Aorta (tissue), 5 donors: ENCODE measurements at regions of chr3 and their contacts with region 1.

Region 1: GRCh38 chr3:184017672-184018423 is at the start of gene ABCC5:
- DNase-seq: peak; percentile 95 to 96
- ATAC-seq: peak; percentile 99
- H3K4me3 ChIP-seq: peak within 1 kb of the TSS; percentile 52 to 85
- H3K27ac ChIP-seq: peak within 1 kb of the TSS in 1 of 2 donors; percentile 11
- H3K4me1 ChIP-seq: no peaks in the 10 kb centered on the region
- H3K27me3 ChIP-seq: no peaks in the 10 kb centered on the region
- total RNA-seq, gene ABCC5: 18.9 to 49.6 TPM

Region 2: DNA sequence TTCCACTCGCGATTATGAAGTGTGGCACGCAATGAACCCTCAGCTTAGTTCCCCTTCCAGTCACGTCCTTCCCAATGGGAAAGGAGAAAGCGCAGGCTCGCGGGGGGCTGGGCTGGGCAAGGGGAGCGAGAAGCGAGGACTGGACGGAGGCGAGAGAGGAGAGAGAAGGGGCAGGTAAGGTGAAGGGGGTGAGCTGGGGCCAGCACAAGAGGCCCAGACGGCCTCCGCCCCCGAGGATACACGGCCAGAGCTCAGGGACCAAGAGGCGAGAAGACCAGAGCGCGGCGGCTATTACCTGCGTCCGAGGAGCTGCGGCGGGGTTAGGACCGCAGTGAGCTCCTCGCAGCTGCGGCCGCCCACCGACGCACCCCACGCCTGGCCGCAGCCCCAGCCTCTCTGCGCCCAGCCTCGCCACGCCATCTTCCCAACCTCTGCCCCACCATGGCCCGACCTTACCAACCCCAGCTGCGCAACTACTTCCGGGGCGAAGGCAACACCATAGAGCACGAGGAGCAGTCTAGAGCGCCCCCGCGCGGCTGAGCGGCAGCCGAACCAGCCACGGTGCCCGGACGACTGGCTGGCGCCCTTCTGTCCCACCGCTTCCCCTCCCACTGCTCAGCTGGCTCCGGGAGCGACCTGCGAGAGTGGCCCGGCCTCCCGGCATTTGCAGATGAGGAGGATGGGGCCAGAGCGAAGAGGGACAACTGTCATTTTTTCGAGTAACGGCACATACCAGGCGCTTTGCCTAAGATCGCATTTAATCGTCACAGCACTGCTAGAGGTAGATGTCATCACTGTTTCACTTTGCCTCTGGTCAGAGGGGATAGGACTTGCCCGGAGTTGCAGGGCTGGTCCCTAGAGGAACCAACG is 133.2 kb before region 1 on chr3 and contains the start of gene PARL:
- intact Hi-C with region 1: loop called in 1 of 2 experiments (anchors 10 kb)
- DNase-seq: peak; percentile 98 to 100
- ATAC-seq: peak; percentile 100
- H3K4me3 ChIP-seq: peak within 1 kb of the TSS; percentile 79 to 81
- H3K27ac ChIP-seq: peak within 1 kb of the TSS in 1 of 2 donors; percentile 43
- H3K4me1 ChIP-seq: peaks cover 0 to 6% of the 10 kb centered on the region in 2 donors
- H3K27me3 ChIP-seq: no peaks in the 10 kb centered on the region
- total RNA-seq, gene PARL: 49.5 to 56.5 TPM

Region 3: DNA sequence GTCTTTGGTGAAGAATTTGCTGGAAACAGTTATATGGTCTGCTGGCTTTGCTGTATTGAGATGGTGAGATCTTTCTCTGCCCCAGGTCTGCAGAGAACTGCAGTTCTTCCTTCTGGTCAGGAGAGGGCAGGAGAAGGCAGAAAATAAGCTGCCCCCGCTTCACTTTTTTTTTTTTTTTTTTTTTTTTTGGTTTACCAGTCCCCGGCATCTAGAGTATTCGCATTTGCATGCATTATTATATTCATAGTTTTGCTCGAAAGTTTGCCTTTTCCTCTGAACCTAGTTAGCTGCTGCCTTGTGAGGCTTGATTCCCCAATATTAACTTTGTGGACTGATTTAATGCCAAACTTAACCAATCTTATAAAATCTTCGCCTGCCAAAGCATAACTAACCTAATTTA is 122.6 kb before region 1 on chr3:
- intact Hi-C with region 1: loop called in 1 of 2 experiments (anchors 1 kb)
- DNase-seq: no peak
- ATAC-seq: peak; percentile 69
- H3K4me3 ChIP-seq: no peak overlapping the region
- H3K27ac ChIP-seq: no peak overlapping the region
- H3K4me1 ChIP-seq: no peaks in the 10 kb centered on the region
- H3K27me3 ChIP-seq: no peaks in the 10 kb centered on the region